ENCODE measurements at regions of chr20 and their contacts with region 1.

Region 1: GRCh38 chr20:330233-331149 is 5.1 kb downstream of the SOX12 start:
- DNase-seq: peak; percentile 68
- ATAC-seq: peak; percentile 31
- H3K4me3 Mint-ChIP-seq: peak overlapping the region; percentile 87
- H3K27ac Mint-ChIP-seq: peak overlapping the region; percentile 76; the same call in 1 of the 2 replicates
- H3K4me1 Mint-ChIP-seq: peaks cover 33% of the 10 kb centered on the region
- H3K27me3 Mint-ChIP-seq: peaks cover 35% of the 10 kb centered on the region
- CTCF ChIP-seq: peak; percentile 79

Region 2: GRCh38 chr20:258963-259362 is 71.5 kb before region 1 on chr20:
- CTCF ChIA-PET with region 1: interaction called, 12 read pairs
- POLR2A ChIA-PET with region 1: no interaction called
- DNase-seq: no peak
- ATAC-seq: no peak; the same call in none of the 2 replicates
- H3K4me3 Mint-ChIP-seq: no peak overlapping the region
- H3K27ac Mint-ChIP-seq: no peak overlapping the region
- H3K4me1 Mint-ChIP-seq: no peaks in the 10 kb centered on the region
- H3K27me3 Mint-ChIP-seq: peaks cover 98% of the 10 kb centered on the region
- CTCF ChIP-seq: no peak

Region 3: DNA sequence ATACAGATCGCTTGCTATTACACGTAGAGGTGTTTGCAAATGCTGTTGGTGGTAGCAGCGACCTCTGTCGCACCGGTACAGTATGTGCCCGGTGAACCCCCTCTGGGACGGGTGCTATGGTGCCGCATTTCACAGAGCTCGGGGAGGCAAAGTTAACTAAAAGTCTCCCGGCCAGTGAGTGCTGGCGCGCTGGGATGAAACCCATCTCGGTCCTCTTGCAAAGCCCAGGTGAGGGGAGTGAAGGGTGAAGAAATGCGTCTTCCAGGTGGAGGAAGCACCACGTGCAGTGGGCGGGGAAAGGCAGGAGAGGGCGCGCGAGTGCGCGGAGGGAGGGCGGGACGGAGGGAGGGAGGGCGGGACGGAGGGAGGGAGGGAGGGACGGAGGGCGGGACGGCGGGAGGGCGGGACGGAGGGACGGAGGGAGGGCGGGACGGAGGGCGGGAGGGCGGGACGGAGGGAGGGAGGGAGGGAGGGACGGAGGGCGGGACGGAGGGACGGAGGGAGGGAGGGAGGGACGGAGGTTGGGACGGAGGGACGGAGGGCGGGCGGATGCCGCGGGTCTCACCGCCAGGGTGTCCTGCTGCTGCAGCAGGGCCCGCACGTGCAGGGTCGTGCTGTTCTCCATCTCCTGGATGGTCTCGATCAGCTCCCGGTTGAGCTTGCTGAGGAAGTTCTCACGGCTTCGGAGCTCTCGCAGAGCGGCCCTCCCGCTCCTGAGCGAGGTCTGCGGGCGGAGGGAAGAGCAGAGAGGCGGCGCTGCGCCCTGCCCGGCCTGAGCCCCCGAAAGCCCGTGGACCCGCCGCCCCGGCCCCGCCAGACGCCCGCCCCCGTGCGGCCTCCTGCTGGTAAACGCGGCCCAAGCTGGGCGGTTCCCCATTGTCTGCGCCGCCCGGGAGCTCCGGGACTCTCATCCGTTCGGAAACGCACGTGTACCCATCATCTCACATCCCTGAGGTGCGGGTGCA is 51.6 kb before region 1 on chr20:
- CTCF ChIA-PET with region 1: interaction called, 42 read pairs
- POLR2A ChIA-PET with region 1: interaction called, 22 read pairs
- DNase-seq: peak; percentile 75
- ATAC-seq: peak; percentile 79
- H3K4me3 Mint-ChIP-seq: peak overlapping the region; percentile 77
- H3K27ac Mint-ChIP-seq: peak overlapping the region; percentile 98
- H3K4me1 Mint-ChIP-seq: peaks cover 13% of the 10 kb centered on the region
- H3K27me3 Mint-ChIP-seq: peaks cover 27% of the 10 kb centered on the region
- CTCF ChIP-seq: no peak

Region 4: DNA sequence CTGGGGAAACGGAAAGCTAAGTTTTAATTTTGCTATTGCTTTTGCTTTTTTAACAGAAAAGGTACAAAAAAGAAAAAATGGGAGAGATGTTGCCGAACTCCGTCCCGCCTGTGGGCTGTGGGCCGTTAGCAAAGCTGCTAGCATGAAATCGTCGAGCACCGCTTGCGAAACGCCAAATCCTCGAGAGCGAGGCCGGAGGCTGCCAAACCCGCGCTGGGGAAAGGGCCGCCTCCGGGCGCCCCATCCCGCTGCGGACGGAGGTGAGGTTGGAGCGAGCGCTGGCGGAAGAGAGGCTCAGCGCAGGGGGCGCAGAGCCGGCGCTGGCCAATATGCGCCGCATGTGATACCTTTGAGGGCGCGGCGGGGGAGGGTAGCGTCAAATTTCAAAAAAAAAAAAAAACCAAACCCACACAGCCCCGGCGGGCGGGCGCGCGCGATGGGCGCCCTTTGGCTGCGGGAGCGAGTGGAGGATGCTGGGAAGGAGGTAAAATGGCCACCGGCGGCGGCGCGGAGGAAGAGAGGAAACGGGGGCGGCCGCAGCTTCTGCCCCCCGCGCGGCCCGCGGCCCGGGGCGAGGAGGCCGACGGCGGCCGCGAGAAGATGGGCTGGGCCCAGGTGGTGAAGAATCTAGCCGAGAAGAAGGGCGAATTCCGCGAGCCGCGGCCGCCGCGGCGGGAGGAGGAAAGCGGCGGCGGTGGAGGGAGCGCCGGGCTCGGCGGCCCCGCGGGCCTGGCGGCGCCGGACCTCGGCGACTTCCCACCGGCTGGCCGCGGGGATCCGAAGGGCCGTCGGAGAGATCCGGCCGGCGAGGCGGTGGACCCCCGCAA is 33.2 kb before region 1 on chr20 and contains the start of gene ZCCHC3:
- CTCF ChIA-PET with region 1: interaction called, 55 read pairs
- POLR2A ChIA-PET with region 1: interaction called, 110 read pairs
- DNase-seq: peak; percentile 88
- ATAC-seq: peak; percentile 82
- H3K4me3 Mint-ChIP-seq: peak within 1 kb of the TSS; percentile 100
- H3K27ac Mint-ChIP-seq: peak within 1 kb of the TSS; percentile 100
- H3K4me1 Mint-ChIP-seq: peaks cover 43% of the 10 kb centered on the region
- H3K27me3 Mint-ChIP-seq: peaks cover 37% of the 10 kb centered on the region
- CTCF ChIP-seq: no peak
- total RNA-seq, gene ZCCHC3: 43.6 to 54.1 TPM (median 52.6 TPM) in 3 replicates

Region 5: GRCh38 chr20:309841-310644 is 20.4 kb before region 1 on chr20:
- CTCF ChIA-PET with region 1: interaction called, 39 read pairs
- POLR2A ChIA-PET with region 1: interaction called, 47 read pairs
- DNase-seq: peak; percentile 99
- ATAC-seq: peak; percentile 98
- H3K4me3 Mint-ChIP-seq: peak overlapping the region; percentile 72
- H3K27ac Mint-ChIP-seq: peak overlapping the region; percentile 100
- H3K4me1 Mint-ChIP-seq: peaks cover 36% of the 10 kb centered on the region
- H3K27me3 Mint-ChIP-seq: peaks cover 5% of the 10 kb centered on the region
- CTCF ChIP-seq: no peak

Region 6: DNA sequence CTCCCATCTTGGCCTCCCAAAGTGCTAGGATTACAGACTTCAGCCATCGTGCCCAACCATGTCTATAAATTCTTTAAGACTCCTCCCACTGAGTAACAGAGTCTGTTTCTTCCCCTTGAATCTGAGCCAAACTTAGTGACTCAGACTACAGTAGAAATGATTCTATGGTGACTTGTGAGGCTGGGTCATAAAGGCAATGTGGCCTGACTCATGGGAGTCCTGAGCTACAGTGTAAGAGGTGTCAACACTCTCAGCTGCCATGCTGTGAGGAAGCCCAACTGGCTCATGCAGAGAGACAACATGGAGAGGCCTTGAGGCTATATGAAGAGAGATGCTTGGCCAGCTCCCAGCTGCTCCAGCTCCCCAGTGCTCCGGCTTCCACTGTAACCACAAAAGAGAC is 11.2 kb after region 1 on chr20:
- CTCF ChIA-PET with region 1: interaction called, 37 read pairs
- POLR2A ChIA-PET with region 1: interaction called, 13 read pairs
- DNase-seq: no peak
- ATAC-seq: no peak
- H3K4me3 Mint-ChIP-seq: no peak overlapping the region
- H3K27ac Mint-ChIP-seq: no peak overlapping the region
- H3K4me1 Mint-ChIP-seq: peaks cover 5% of the 10 kb centered on the region
- H3K27me3 Mint-ChIP-seq: peaks cover 71% of the 10 kb centered on the region
- CTCF ChIP-seq: no peak

Region 7: GRCh38 chr20:347640-348484 is 17.4 kb after region 1 on chr20:
- CTCF ChIA-PET with region 1: interaction called, 37 read pairs
- POLR2A ChIA-PET with region 1: interaction called, 13 read pairs
- DNase-seq: peak; percentile 97
- ATAC-seq: peak; percentile 80
- H3K4me3 Mint-ChIP-seq: peak overlapping the region; percentile 89
- H3K27ac Mint-ChIP-seq: peak overlapping the region; percentile 93
- H3K4me1 Mint-ChIP-seq: peaks cover 17% of the 10 kb centered on the region
- H3K27me3 Mint-ChIP-seq: peaks cover 15% of the 10 kb centered on the region
- CTCF ChIP-seq: no peak